Lower lobe of right lung (tissue), 2 donors: ENCODE measurements at regions of chr5 and their contacts with region 1.

Region 1: GRCh38 chr5:58498340-58498942 is 7.2 kb downstream of the GAPT start:
- DNase-seq: no peak
- ATAC-seq: peak in 1 of 2 donors; percentile 66
- H3K4me3 ChIP-seq: no peak overlapping the region
- H3K27ac ChIP-seq: no peak overlapping the region
- H3K4me1 ChIP-seq: peaks cover 3% of the 10 kb centered on the region
- H3K27me3 ChIP-seq: no peaks in the 10 kb centered on the region
- CTCF ChIP-seq: peak; percentile 70

Region 2: DNA sequence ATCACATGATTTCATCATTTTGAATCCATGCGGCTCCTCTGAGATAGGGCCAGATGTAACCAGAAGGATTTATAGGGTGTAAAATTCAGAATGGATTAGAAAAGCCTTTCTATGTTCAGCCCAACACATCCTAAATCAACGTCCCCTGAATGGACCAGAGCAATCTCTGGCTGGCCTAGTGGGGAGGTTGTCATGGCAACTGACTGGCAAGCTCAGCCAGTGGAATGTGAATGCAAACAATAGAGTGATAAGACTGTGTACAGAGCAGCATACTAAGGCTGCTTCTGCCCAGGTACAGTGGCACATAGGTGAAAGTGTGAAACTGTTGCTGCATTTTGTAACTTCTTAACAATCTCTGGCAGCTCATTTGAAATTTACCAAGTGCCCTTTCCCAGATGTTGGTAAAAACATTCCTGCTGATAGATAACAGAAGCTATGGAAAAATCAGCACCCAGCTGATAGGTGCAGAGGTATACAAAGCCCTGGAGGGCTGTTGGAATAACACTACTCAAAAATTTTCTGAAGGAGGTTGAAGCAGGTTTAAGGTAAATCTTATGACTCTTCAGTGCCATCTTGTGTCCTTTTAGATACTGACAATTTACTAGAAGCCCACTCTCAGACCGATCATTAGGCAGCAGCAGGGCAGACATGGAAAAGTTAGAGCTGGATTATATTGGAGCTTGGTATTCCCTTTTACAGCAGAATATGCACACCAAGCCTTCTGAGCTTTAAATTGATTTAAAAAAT is 351.7 kb after region 1 on chr5:
- intact Hi-C with region 1: loop called (anchors 10 kb)
- DNase-seq: peak; percentile 66
- ATAC-seq: peak; percentile 92 to 96
- H3K4me3 ChIP-seq: no peak overlapping the region
- H3K27ac ChIP-seq: no peak overlapping the region
- H3K4me1 ChIP-seq: peaks cover 12% of the 10 kb centered on the region
- H3K27me3 ChIP-seq: no peaks in the 10 kb centered on the region
- CTCF ChIP-seq: peak; percentile 48